IMR-90 (cell line): ENCODE measurements at regions of chr7 and their contacts with region 1.

Region 1: GRCh38 chr7:133853706-133854276 is 273.3 kb upstream of the LRGUK start:
- DNase-seq: peak; percentile 90
- ATAC-seq: peak; percentile 91
- H3K4me3 ChIP-seq: no peak overlapping the region
- H3K27ac ChIP-seq: peak overlapping the region; percentile 44
- H3K4me1 ChIP-seq: peaks cover 9% of the 10 kb centered on the region
- H3K27me3 ChIP-seq: no peaks in the 10 kb centered on the region
- CTCF ChIP-seq: peak; percentile 46
- POLR2A ChIP-seq: no peak
- RAD21 ChIP-seq: peak; percentile 49

Region 2: DNA sequence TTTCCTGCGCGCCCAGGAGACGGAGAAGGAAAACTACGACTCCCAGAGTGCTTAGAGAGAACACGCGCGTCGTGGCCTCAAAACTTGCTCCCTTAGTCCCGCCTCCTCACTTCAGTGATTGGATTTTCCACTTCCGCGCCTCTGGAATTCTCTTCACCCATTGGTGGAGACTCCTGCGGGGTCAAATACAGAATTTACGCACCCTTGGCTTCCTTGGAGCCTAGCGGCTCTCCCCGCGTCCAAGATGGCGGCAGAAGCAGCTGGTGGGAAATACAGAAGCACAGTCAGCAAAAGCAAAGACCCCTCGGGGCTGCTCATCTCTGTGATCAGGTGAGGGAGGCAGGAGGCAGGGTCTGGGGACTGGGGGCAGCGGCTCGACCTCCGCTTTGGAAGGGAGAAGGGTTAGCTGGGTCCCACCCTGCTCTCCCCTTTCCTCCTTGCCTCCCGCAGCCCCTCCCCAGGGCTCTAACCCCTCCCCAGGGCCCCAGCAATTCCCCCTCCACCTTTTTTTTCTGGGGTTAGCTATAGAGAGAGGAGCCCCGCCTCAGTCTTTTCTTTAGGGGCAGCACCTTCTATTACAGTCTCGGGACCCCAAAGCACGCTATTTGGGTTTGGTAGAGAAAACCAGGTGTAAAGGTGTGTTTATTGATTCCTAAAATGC is 600.8 kb before region 1 on chr7 and contains the start of gene EXOC4:
- CTCF ChIA-PET with region 1: no interaction called
- POLR2A ChIA-PET with region 1: no interaction called
- dilution Hi-C with region 1: no loop called
- in situ Hi-C with region 1: no loop called
- intact Hi-C with region 1: loop called (anchors 10 kb)
- DNase-seq: peak; percentile 97
- ATAC-seq: peak; percentile 100
- H3K4me3 ChIP-seq: peak within 1 kb of the TSS; percentile 84
- H3K27ac ChIP-seq: peak within 1 kb of the TSS; percentile 91
- H3K4me1 ChIP-seq: no peaks in the 10 kb centered on the region
- H3K27me3 ChIP-seq: no peaks in the 10 kb centered on the region
- CTCF ChIP-seq: no peak
- POLR2A ChIP-seq: peak; percentile 66
- RAD21 ChIP-seq: no peak
- total RNA-seq, gene EXOC4: 85.5 and 94.6 TPM in 2 replicates

Region 3: DNA sequence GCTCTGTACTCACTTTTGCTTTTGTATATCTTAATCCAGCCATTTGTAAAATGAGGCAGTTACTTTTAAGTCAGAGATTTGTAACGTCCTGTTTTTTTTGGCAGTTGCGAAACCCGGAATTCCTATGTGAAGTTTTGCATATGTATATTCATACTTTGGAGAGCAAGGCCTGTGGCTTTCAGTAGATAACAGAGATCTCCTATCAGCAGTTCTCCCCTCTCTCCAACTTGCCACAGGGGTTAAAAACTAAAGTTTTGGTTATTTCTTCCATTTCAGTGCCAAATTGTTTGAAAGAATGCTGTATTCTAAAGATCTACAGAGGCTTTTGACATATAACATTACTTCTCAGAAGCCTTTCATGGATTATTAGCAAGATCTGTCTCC is 498.5 kb before region 1 on chr7:
- CTCF ChIA-PET with region 1: no interaction called
- POLR2A ChIA-PET with region 1: no interaction called
- dilution Hi-C with region 1: no loop called
- in situ Hi-C with region 1: no loop called
- intact Hi-C with region 1: loop called (anchors 5 kb)
- DNase-seq: peak; percentile 93
- ATAC-seq: peak; percentile 85
- H3K4me3 ChIP-seq: no peak overlapping the region
- H3K27ac ChIP-seq: peak overlapping the region; percentile 58; the same call in 1 of the 2 replicates
- H3K4me1 ChIP-seq: peaks cover 11% of the 10 kb centered on the region
- H3K27me3 ChIP-seq: no peaks in the 10 kb centered on the region
- CTCF ChIP-seq: no peak
- POLR2A ChIP-seq: no peak
- RAD21 ChIP-seq: no peak

Region 4: DNA sequence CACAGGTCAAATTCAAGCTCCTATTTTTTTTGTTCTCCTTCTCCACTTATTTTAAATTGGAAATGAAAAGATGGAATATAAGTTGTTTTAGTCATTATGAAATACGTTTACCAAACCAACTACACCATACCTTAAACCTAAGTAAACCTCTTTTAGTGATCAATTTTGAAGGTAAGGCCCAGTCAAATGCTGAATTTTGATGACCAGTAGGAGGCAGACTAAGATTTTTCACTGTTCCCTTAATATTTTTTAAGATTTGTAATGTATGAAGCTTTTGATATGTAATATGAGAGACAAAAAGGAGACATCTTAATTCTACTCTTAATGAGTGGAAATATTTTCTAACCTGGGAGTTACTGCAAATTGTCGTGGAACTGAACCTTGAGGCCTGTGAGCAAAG is 289.3 kb before region 1 on chr7:
- CTCF ChIA-PET with region 1: no interaction called
- POLR2A ChIA-PET with region 1: no interaction called
- dilution Hi-C with region 1: no loop called
- in situ Hi-C with region 1: no loop called
- intact Hi-C with region 1: loop called (anchors 10 kb)
- DNase-seq: no peak
- ATAC-seq: no peak
- H3K4me3 ChIP-seq: no peak overlapping the region
- H3K27ac ChIP-seq: no peak overlapping the region
- H3K4me1 ChIP-seq: peaks cover 6% of the 10 kb centered on the region
- H3K27me3 ChIP-seq: no peaks in the 10 kb centered on the region
- CTCF ChIP-seq: no peak
- POLR2A ChIP-seq: no peak
- RAD21 ChIP-seq: no peak

Region 5: GRCh38 chr7:133871757-133872156 is 18.0 kb after region 1 on chr7:
- CTCF ChIA-PET with region 1: no interaction called
- POLR2A ChIA-PET with region 1: no interaction called
- dilution Hi-C with region 1: no loop called
- in situ Hi-C with region 1: no loop called
- intact Hi-C with region 1: no loop called
- DNase-seq: no peak
- ATAC-seq: no peak
- H3K4me3 ChIP-seq: no peak overlapping the region
- H3K27ac ChIP-seq: no peak overlapping the region
- H3K4me1 ChIP-seq: no peaks in the 10 kb centered on the region
- H3K27me3 ChIP-seq: no peaks in the 10 kb centered on the region
- CTCF ChIP-seq: no peak
- POLR2A ChIP-seq: no peak
- RAD21 ChIP-seq: no peak

Region 6: DNA sequence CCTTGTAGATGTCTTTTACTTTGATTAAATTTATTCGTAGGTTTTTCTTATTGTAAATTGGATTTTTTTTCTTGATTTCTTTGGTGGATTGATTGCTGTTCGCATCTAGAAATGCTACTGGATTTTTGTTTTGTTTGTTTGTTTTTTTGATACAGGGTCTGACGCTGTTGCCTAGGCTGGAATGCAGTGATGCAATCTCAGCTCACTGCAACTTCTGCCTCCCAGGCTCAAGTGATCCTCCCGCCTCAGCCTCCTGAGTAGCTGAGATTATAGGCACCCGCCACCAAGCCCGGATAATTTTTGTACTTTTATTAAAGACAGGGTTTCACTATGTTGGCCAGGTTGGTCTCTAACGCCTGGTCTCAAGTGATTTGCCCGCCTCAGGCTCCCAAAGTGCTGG is 138.4 kb after region 1 on chr7:
- CTCF ChIA-PET with region 1: no interaction called
- POLR2A ChIA-PET with region 1: no interaction called
- dilution Hi-C with region 1: no loop called
- in situ Hi-C with region 1: no loop called
- intact Hi-C with region 1: loop called (anchors 5 kb)
- DNase-seq: no peak
- ATAC-seq: no peak
- H3K4me3 ChIP-seq: no peak overlapping the region
- H3K27ac ChIP-seq: no peak overlapping the region
- H3K4me1 ChIP-seq: no peaks in the 10 kb centered on the region
- H3K27me3 ChIP-seq: no peaks in the 10 kb centered on the region
- CTCF ChIP-seq: no peak
- POLR2A ChIP-seq: no peak
- RAD21 ChIP-seq: no peak

Region 7: GRCh38 chr7:134730411-134730829 is 876.6 kb after region 1 on chr7:
- CTCF ChIA-PET with region 1: no interaction called
- POLR2A ChIA-PET with region 1: no interaction called
- dilution Hi-C with region 1: no loop called
- in situ Hi-C with region 1: no loop called
- intact Hi-C with region 1: no loop called
- DNase-seq: peak; percentile 73
- ATAC-seq: peak; percentile 69
- H3K4me3 ChIP-seq: peak overlapping the region; percentile 16; the same call in 1 of the 2 replicates
- H3K27ac ChIP-seq: peak overlapping the region; percentile 79
- H3K4me1 ChIP-seq: peaks cover 22% of the 10 kb centered on the region
- H3K27me3 ChIP-seq: no peaks in the 10 kb centered on the region
- CTCF ChIP-seq: no peak
- POLR2A ChIP-seq: no peak
- RAD21 ChIP-seq: no peak